Spleen (tissue), 13 donors: ENCODE measurements at regions of chr17 and their contacts with region 1.

Region 1: DNA sequence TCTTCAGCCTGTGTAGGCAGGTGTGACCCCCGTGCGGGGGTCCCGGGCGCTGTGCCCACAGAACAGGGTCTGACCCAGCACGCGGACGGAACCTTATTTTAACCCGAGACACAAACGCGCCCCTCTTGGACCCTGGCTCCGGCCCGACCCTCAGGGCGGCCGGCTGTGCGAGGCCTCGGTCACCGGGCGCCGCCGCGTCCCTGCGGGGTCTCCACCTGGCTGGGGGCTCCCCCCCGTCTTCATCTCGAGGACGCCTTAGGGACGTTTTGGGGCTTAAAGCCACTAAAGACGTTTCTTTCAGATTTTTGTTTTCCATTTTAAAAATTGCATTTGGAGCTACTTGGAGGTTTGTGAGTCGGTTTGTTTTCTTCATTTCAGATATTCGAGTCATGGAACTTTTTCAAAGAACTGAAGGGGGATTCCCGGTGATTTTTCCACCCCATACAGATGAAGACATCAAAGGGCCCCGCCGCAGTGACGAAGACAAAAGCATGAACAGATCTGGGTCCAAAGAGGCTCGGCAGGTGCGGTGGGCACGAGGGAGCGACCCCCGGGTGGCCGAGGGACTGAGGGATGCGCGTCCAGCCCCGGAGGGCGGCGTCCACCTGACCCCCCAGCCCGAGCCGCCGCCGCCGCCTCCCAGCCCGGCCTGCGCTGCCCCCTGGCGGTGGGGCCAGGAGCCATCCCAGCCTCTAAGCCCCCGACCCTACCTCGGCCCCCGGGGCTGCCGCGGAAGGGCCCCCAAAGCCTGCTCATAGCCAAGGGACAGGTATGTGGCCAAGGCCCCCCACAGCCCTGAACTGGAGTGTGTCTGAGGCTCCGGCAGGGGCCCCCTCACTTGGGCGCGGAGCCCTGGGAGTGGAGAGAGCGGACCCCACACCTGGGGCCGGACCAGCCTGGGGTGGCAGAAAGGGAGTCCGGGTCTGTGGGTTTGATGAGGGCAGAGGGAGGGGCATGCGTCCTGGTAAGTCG is 3.8 kb upstream of the CD7 start:
- DNase-seq: peak; percentile 90
- H3K4me3 ChIP-seq: peak overlapping the region in 3 of 8 donors; percentile 16 to 60 (median 20)
- H3K27ac ChIP-seq: peak overlapping the region in 3 of 8 donors; percentile 9 to 58 (median 49)
- H3K4me1 ChIP-seq: peaks cover 3 to 32% (median 15%) of the 10 kb centered on the region in 6 donors
- H3K27me3 ChIP-seq: peaks cover 0 to 42% (median 0%) of the 10 kb centered on the region in 7 donors
- CTCF ChIP-seq: peak; percentile 66 to 98 (median 88)
- POLR2A ChIP-seq: no peak

Region 2: DNA sequence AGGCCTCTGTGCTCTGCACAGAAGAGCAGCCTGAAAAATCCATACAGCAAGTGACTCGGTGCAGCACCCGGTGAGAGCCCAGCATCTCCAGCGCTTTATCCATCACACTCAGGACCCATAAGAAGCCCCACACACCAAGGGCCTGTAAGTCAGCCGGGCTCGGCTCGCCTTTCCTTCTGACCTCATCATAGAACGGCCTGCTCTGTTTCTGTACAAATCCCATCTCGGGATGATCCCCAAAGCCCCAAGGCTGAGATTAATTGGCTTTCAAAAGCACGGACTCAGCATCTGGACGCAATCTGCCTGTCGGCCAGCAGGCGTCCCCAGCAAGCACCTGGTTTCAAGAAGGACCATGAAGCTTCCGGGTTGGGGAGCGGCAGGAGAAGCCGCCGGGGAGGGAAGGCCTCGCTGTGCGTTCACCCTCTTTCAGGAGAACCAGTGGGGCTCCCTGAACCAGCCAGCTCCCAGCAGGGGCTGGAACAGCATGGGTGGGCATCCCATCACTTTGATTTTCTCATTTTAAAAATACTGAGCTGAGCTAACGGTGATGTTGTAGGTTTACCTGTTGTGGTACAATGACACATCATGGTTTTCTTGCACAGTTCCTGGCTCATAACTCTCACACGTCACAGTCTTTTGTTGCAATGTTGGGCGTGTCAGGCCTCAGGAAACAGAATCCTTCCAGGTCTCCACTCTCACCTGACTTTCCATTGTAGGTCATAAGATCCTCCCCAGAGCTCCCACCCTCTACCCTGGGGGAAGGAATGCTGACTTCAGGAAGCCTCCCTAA is 115.3 kb before region 1 on chr17:
- intact Hi-C with region 1: loop called (anchors 10 kb)
- DNase-seq: peak; percentile 95
- H3K4me3 ChIP-seq: peak overlapping the region in 1 of 8 donors; percentile 54
- H3K27ac ChIP-seq: peak overlapping the region; percentile 76 to 92 (median 88)
- H3K4me1 ChIP-seq: peaks cover 8 to 45% (median 16%) of the 10 kb centered on the region in 6 donors
- H3K27me3 ChIP-seq: no peaks in the 10 kb centered on the region
- CTCF ChIP-seq: peak; percentile 88 to 98 (median 95)
- POLR2A ChIP-seq: peak in 2 of 3 donors; percentile 69

Region 3: GRCh38 chr17:82236142-82236981 is 84.9 kb before region 1 on chr17:
- intact Hi-C with region 1: loop called (anchors 5 kb)
- DNase-seq: peak; percentile 90
- H3K4me3 ChIP-seq: peak overlapping the region in 1 of 8 donors; percentile 25
- H3K27ac ChIP-seq: peak overlapping the region in 7 of 8 donors; percentile 15 to 100 (median 51)
- H3K4me1 ChIP-seq: peaks cover 43 to 100% (median 93%) of the 10 kb centered on the region in 6 donors
- H3K27me3 ChIP-seq: no peaks in the 10 kb centered on the region
- CTCF ChIP-seq: peak; percentile 81 to 96 (median 93)
- POLR2A ChIP-seq: no peak

Region 4: GRCh38 chr17:82267575-82268379 is 53.5 kb before region 1 on chr17:
- intact Hi-C with region 1: no loop called
- DNase-seq: peak; percentile 86
- H3K4me3 ChIP-seq: peak overlapping the region in 1 of 8 donors; percentile 45
- H3K27ac ChIP-seq: peak overlapping the region; percentile 24 to 100 (median 78)
- H3K4me1 ChIP-seq: peaks cover 53 to 95% (median 69%) of the 10 kb centered on the region in 6 donors
- H3K27me3 ChIP-seq: no peaks in the 10 kb centered on the region
- CTCF ChIP-seq: no peak
- POLR2A ChIP-seq: no peak